Cardiac septum (tissue), 1 donor: ENCODE measurements at regions of chr1 and their contacts with region 1.

Region 1: DNA sequence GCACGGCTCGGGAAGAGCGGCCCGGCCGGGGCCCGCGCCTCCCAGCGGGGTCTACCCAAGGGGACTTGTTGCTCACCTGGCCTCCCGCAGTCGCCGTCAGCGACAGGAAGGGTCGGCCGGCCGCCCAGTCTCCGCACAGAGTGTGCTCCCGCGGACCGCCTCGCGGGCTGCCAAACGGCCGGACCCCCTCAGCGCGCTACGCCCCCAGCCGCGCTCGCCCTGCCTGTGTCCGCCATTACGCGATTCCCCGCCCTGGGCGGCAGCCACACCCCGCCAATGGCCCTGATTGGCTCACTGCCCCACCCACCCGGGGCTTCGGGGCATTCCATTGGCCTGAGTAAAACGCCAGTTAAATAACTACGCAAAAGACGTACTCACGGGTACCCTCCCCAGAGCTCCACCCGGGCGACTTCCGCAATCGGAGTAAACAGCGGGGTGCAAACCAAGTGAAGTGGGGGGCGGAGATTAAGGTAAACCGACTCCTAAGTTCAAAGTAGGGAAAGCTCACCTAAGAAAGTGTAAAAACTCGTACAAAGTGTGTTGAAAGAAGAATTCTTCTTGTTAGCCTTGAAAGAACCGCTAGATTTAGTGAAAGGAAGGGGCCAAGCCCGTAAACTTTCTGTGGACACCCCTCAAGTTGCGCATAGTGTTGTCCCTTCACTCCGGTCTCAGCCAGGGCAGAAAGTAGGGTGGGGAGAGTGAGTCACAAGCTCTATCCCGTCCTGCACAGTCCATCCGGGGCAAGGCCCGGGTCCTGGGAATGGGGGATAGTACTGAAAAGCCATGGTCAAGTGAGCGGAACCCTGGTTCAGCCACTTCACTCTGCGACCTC is at the start of gene WASF2:
- DNase-seq: peak; percentile 99
- total RNA-seq, gene WASF2: 59.3 TPM

Region 2: GRCh38 chr1:27430903-27431600 is 59.1 kb before region 1 on chr1:
- intact Hi-C with region 1: loop called (anchors 5 kb)
- DNase-seq: no peak

Region 3: DNA sequence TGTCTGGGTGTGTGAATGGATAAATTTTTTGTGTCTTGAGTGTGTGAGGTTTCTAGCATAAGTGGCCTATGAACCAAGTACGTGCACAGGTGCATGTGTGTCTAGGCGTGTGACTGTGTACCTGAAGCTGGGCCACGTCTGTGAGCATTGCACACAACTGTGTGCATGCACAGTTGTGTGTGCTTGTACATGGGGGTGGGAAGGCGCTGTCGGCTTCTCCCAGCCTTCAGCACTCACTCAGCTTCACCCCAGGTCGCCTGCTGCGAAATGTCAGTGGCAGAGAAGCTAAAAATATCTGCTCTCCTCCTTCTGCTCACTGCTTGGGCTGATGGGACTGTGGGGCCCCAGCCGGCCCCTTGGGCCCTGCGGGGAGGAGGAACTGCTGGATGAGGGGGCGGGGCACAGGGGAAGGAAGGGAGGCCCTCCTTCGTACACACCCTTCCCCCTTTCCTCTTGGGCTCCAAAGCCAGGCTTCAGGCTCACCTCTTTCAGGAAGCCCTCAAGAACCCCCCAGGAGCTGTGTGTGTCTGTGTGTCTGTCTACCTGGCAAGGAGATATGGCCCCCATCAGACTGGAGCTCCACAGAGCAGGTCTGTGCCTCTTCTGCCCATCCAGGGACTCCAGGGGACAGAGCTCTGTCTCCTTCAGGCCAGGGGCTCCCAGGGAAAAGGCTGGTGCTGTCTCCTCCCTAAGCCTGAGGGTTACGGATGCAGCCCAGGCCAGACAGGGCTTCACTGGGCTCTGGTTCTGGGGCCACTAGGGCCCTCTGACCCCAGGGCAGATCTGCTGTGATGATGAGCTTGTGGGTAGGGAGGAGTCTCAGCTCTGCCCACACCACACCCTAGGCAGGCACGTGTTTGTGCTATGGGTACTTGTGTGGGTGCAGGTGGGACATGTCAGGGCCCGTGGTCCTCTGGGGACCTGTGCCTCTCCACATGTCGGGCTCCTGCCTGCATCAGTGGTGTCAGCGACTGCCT is 35.5 kb after region 1 on chr1:
- intact Hi-C with region 1: loop called (anchors 2 kb)
- DNase-seq: peak; percentile 92

Region 4: DNA sequence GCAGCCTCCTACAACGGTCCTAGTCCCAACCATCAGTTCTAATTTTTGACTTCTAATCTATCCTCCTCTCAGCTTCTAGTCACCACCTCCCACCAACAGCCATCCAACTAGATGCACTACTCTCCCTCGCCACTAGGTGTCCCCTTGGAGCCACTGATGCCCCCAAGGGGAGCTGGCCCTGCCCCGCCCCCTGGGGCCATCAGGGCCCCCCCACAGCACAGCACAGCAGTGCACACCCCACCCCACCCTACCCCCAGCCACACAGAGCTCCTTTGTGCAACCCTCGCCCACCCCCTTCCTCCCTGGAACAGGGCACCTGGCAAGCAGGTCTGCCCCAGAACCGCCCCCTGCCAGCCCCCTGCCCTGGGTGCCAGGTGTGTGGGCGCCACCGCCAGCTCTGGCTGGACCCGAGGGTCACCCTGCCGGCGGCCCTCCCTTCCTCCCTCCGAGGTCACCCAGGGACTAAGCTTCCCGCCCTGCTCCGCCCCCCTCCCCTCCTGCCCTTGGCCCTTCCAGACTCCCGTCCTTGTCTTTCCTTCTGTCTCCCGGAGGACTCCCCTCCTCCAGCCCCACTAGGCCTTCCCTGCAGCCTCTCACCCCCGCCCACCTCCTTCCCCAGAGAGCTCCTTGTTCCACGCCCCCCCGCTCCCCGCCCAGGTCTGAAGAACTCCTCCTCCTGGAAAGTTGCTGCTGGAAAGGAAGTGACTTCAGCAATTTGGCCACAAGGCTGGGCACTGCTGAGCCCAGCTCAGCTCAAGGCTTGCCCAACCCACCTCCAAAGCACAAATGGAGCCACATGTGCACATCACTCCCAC is 66.9 kb after region 1 on chr1:
- intact Hi-C with region 1: loop called (anchors 5 kb)
- DNase-seq: peak; percentile 93

Region 5: DNA sequence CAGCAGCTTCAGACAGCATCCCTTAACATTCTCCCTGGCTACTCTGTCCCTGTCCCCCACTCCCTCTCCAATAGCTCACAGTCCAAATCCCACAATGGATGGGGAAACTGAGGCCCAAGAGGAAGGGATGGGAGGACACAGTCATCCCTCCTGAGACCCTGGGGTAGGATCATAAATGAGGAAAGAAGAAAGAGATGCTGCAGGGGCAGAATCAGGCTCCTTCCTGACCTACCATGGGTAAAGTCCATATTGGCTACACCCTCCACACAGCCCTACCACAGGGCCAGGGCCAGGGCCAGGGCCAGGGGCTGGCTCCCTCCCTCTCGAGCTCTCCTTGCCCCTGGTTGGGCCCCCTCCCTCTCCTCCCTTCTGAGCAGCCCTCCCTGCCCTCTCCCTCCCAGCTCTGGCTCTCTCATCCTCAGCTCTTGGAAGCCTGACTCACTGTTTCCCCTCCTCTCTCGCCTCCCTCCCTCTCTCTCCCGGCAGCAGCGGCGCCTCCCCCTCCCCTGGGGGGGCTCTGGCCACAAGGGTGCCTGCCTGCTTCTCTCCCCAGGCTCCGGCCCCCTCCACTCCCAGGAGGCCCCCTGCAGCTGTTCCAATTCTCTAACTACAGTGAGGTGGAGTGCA is 108.9 kb after region 1 on chr1:
- intact Hi-C with region 1: no loop called
- DNase-seq: peak; percentile 88

Region 6: GRCh38 chr1:27884006-27884954 is 394.2 kb after region 1 on chr1:
- intact Hi-C with region 1: no loop called
- DNase-seq: no peak

Region 7: GRCh38 chr1:28021064-28021463 is 530.9 kb after region 1 on chr1:
- intact Hi-C with region 1: no loop called
- DNase-seq: no peak